ENCODE measurements at regions of chr1 and their contacts with region 1.

Region 1: DNA sequence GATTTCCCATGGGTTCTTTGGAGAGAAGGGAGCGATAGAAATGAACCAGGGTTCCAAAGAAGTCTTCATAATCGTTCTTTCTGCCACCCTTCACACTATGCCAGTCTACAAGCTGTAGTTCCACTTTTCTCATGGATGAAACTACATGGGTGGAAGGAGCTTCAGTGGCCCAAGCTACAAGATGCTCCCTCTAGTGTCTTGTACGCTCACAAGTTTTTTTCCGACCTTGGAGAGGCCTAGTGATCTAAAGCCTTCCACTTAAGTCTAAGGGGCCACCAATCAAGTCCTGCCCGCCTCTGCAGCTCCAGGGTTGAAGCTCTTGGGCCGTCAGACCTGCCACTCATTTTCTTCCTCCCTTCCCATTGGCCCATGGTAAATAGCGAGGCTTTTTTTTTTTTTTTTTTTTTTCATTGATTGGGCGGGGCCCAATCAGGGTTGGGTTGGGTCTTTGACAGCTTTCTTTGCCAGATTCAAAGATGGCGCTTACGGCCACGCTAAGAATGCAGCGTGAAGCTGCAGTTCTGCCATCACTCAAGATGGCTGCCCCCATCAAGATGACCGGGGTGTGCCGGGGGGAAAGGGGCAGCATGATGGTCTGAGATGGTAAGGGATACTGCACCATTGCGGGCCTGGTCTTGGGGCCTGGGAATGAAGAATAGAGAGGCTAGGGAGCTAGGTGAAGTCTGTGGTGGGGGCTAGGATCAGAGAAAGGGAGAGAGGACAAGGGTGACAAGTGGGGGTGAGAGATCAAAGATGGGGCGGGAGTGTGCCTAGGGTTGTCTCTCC is at the start of gene TOMM40L:
- DNase-seq: peak; percentile 96
- ATAC-seq: peak; percentile 98
- H3K4me3 Mint-ChIP-seq: peak within 1 kb of the TSS; percentile 95
- H3K27ac Mint-ChIP-seq: peak within 1 kb of the TSS; percentile 99
- H3K4me1 Mint-ChIP-seq: peaks cover 43% of the 10 kb centered on the region
- H3K27me3 Mint-ChIP-seq: no peaks in the 10 kb centered on the region
- total RNA-seq, gene TOMM40L: 19.1 to 22.0 TPM

Region 2: GRCh38 chr1:160942926-160943325 is 282.8 kb before region 1 on chr1:
- CTCF ChIA-PET with region 1: no interaction called
- POLR2A ChIA-PET with region 1: no interaction called
- DNase-seq: no peak
- ATAC-seq: no peak
- H3K4me3 Mint-ChIP-seq: no peak overlapping the region
- H3K27ac Mint-ChIP-seq: no peak overlapping the region
- H3K4me1 Mint-ChIP-seq: no peaks in the 10 kb centered on the region
- H3K27me3 Mint-ChIP-seq: peaks cover 29% of the 10 kb centered on the region

Region 3: GRCh38 chr1:161185282-161185682 is 40.4 kb before region 1 on chr1:
- CTCF ChIA-PET with region 1: interaction called, 68 read pairs
- POLR2A ChIA-PET with region 1: interaction called, 11 read pairs
- DNase-seq: peak; percentile 90
- ATAC-seq: peak; percentile 83
- H3K4me3 Mint-ChIP-seq: peak overlapping the region; percentile 62
- H3K27ac Mint-ChIP-seq: peak overlapping the region; percentile 91
- H3K4me1 Mint-ChIP-seq: peaks cover 79% of the 10 kb centered on the region
- H3K27me3 Mint-ChIP-seq: no peaks in the 10 kb centered on the region

Region 4: GRCh38 chr1:161201828-161202725 is 23.6 kb before region 1 on chr1 and contains the start of gene NDUFS2:
- CTCF ChIA-PET with region 1: interaction called, 331 read pairs
- POLR2A ChIA-PET with region 1: interaction called, 31 read pairs
- DNase-seq: peak; percentile 99
- ATAC-seq: peak; percentile 99
- H3K4me3 Mint-ChIP-seq: peak within 1 kb of the TSS; percentile 93
- H3K27ac Mint-ChIP-seq: peak within 1 kb of the TSS; percentile 95
- H3K4me1 Mint-ChIP-seq: peaks cover 78% of the 10 kb centered on the region
- H3K27me3 Mint-ChIP-seq: no peaks in the 10 kb centered on the region
- total RNA-seq, gene NDUFS2: 73.6 to 76.8 TPM

Region 5: GRCh38 chr1:161287482-161288054 is 61.8 kb after region 1 on chr1:
- CTCF ChIA-PET with region 1: interaction called, 33 read pairs
- POLR2A ChIA-PET with region 1: no interaction called
- DNase-seq: no peak
- ATAC-seq: no peak
- H3K4me3 Mint-ChIP-seq: no peak overlapping the region
- H3K27ac Mint-ChIP-seq: no peak overlapping the region
- H3K4me1 Mint-ChIP-seq: no peaks in the 10 kb centered on the region
- H3K27me3 Mint-ChIP-seq: peaks cover 15% of the 10 kb centered on the region

Region 6: GRCh38 chr1:161305867-161306519 is 80.3 kb after region 1 on chr1:
- CTCF ChIA-PET with region 1: interaction called, 31 read pairs
- POLR2A ChIA-PET with region 1: interaction called, 3 read pairs
- DNase-seq: peak; percentile 91
- ATAC-seq: peak; percentile 94
- H3K4me3 Mint-ChIP-seq: peak overlapping the region; percentile 91
- H3K27ac Mint-ChIP-seq: peak overlapping the region; percentile 85
- H3K4me1 Mint-ChIP-seq: peaks cover 37% of the 10 kb centered on the region
- H3K27me3 Mint-ChIP-seq: peaks cover 7% of the 10 kb centered on the region

Region 7: GRCh38 chr1:161367684-161368400 is 142.1 kb after region 1 on chr1 and contains the start of gene CFAP126:
- CTCF ChIA-PET with region 1: interaction called, 16 read pairs
- POLR2A ChIA-PET with region 1: no interaction called
- DNase-seq: peak; percentile 61
- ATAC-seq: peak; percentile 99
- H3K4me3 Mint-ChIP-seq: no peak within 1 kb of the TSS
- H3K27ac Mint-ChIP-seq: peak within 1 kb of the TSS; percentile 11
- H3K4me1 Mint-ChIP-seq: peaks cover 4% of the 10 kb centered on the region
- H3K27me3 Mint-ChIP-seq: no peaks in the 10 kb centered on the region
- total RNA-seq, gene CFAP126: not detected

Region 8: DNA sequence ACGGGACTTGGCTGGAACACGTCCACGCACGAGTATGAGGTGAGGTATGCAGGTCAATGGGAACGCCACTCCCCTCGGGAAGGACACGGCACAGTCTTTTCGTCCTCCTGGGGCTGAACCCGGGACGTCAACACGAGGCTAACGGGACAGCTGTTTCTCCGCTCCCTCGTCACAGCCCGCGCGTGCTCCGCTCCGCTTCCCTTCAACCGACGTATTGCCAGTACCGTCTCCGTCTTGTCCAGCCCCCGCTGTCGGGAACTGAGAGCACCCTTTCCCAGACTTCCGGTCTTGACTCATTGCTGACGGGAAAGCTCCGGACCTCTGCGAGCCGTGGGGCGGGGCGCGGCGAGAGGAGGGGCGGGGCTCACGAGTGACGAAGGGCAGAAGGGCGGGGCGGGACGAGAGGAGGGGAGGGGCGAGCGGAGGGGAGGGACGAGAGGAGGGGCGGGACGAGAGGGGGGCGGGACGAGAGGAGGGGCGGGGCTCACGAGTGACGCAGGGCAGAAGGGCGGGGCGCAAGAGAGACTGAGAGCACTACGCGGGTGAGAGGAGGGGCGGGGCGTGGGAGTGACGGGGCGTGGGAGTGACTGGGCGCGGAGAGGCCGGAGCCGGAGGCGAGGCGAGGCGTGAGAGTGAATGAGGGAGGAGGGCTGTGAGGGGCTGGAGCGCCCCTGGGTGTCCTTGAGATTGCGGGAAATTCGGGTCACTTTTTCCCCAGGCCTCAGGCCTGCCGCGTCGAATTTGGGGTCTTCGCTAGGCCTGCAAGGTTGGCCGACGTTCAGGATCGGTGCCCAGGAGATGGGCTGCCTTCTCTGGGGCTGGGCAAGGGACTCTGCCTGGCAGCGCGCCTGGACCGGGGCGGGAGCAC is 164.2 kb after region 1 on chr1:
- CTCF ChIA-PET with region 1: interaction called, 223 read pairs
- POLR2A ChIA-PET with region 1: interaction called, 7 read pairs
- DNase-seq: peak; percentile 97
- ATAC-seq: peak; percentile 95
- H3K4me3 Mint-ChIP-seq: peak overlapping the region; percentile 89
- H3K27ac Mint-ChIP-seq: peak overlapping the region; percentile 98
- H3K4me1 Mint-ChIP-seq: peaks cover 38% of the 10 kb centered on the region
- H3K27me3 Mint-ChIP-seq: no peaks in the 10 kb centered on the region